ENCODE measurements at regions of chr12 and their contacts with region 1.

Region 1: DNA sequence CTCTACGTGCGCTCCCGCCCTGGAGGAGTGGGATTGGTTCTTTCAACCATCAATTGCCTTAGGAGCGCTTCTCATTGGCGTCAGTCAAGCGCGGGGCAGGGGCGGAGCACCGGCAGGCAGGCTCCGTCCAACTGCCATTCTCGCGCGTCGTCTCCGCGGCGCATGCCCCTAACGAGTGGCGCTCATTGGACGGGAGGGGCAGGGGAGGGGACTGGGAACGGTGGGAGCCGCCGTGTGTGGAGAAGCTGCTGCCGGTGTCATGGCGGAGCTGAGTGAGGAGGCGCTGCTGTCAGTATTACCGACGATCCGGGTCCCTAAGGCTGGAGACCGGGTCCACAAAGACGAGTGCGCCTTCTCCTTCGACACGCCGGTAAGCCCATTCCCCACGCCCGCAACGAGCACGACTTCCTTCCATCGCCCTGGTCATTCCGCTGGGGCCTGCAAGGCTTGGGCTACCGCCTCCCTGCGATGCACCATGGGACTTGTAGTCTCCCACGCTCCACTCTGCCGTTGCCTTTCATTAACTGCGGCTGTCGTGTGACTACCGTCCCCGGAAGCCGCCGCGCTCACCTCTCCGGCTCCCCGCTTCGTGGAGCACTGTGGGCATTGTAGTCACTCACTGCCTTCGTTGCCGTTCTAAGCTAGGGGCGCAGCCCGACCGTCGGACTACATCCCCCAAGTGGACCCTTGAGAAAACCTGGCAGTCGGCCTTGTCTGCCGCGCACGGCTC is at the start of gene USP5:
- DNase-seq: peak; percentile 100
- ATAC-seq: peak; percentile 81
- H3K4me3 ChIP-seq: peak within 1 kb of the TSS; percentile 67 to 94
- H3K27ac ChIP-seq: peak within 1 kb of the TSS; percentile 77
- H3K4me1 ChIP-seq: peaks cover 15 to 31% of the 10 kb centered on the region in 2 experiments
- H3K27me3 ChIP-seq: no peaks in the 10 kb centered on the region
- CTCF ChIP-seq: no peak
- POLR2A ChIP-seq: no peak
- RAD21 ChIP-seq: no peak
- total RNA-seq, gene USP5: 175 TPM

Region 2: DNA sequence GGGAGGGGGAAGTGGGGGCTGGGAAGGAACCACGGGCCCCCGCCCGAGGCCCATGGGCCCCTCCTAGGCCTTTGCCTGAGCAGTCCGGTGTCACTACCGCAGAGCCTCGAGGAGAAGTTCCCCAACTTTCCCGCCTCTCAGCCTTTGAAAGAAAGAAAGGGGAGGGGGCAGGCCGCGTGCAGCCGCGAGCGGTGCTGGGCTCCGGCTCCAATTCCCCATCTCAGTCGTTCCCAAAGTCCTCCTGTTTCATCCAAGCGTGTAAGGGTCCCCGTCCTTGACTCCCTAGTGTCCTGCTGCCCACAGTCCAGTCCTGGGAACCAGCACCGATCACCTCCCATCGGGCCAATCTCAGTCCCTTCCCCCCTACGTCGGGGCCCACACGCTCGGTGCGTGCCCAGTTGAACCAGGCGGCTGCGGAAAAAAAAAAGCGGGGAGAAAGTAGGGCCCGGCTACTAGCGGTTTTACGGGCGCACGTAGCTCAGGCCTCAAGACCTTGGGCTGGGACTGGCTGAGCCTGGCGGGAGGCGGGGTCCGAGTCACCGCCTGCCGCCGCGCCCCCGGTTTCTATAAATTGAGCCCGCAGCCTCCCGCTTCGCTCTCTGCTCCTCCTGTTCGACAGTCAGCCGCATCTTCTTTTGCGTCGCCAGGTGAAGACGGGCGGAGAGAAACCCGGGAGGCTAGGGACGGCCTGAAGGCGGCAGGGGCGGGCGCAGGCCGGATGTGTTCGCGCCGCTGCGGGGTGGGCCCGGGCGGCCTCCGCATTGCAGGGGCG is 318.0 kb before region 1 on chr12 and contains the start of gene GAPDH:
- CTCF ChIA-PET with region 1: no interaction called
- POLR2A ChIA-PET with region 1: interaction called, 13 read pairs
- RAD21 ChIA-PET with region 1: no interaction called
- intact Hi-C with region 1: no loop called
- DNase-seq: peak; percentile 96
- ATAC-seq: peak; percentile 52
- H3K4me3 ChIP-seq: peak within 1 kb of the TSS; percentile 96 to 98
- H3K27ac ChIP-seq: peak within 1 kb of the TSS; percentile 99
- H3K4me1 ChIP-seq: peaks cover 15 to 70% of the 10 kb centered on the region in 2 experiments
- H3K27me3 ChIP-seq: no peaks in the 10 kb centered on the region
- CTCF ChIP-seq: no peak
- POLR2A ChIP-seq: peak; percentile 99
- RAD21 ChIP-seq: no peak
- total RNA-seq, gene GAPDH: 5,901 TPM

Region 3: GRCh38 chr12:6723607-6724396 is 128.3 kb before region 1 on chr12 and contains the start of gene COPS7A:
- CTCF ChIA-PET with region 1: interaction called, 3 read pairs
- POLR2A ChIA-PET with region 1: interaction called, 12 read pairs
- RAD21 ChIA-PET with region 1: no interaction called
- intact Hi-C with region 1: no loop called
- DNase-seq: peak; percentile 98
- ATAC-seq: peak; percentile 96
- H3K4me3 ChIP-seq: peak within 1 kb of the TSS; percentile 54 to 86
- H3K27ac ChIP-seq: peak within 1 kb of the TSS; percentile 91
- H3K4me1 ChIP-seq: peaks cover 5 to 26% of the 10 kb centered on the region in 2 experiments; a peak in 3 of 4 replicates
- H3K27me3 ChIP-seq: no peaks in the 10 kb centered on the region
- CTCF ChIP-seq: no peak
- POLR2A ChIP-seq: peak; percentile 29
- RAD21 ChIP-seq: no peak
- total RNA-seq, gene COPS7A: 67.8 TPM

Region 4: GRCh38 chr12:6825398-6826124 is 26.5 kb before region 1 on chr12:
- CTCF ChIA-PET with region 1: interaction called, 8 read pairs
- POLR2A ChIA-PET with region 1: interaction called, 12 read pairs
- RAD21 ChIA-PET with region 1: no interaction called
- intact Hi-C with region 1: no loop called
- DNase-seq: peak; percentile 47
- ATAC-seq: peak; percentile 46
- H3K4me3 ChIP-seq: no peak overlapping the region
- H3K27ac ChIP-seq: 0 out of 2 replicates have a peak overlapping the region, but pooled peaks have one; percentile 78
- H3K4me1 ChIP-seq: peaks cover 25 to 54% of the 10 kb centered on the region in 2 experiments
- H3K27me3 ChIP-seq: peaks cover 6% of the 10 kb centered on the region; the same call in 1 of the 2 replicates
- CTCF ChIP-seq: peak in 2 of 3 experiments; percentile 91 to 98; a peak in 4 of 6 replicates
- POLR2A ChIP-seq: no peak
- RAD21 ChIP-seq: no peak

Region 5: DNA sequence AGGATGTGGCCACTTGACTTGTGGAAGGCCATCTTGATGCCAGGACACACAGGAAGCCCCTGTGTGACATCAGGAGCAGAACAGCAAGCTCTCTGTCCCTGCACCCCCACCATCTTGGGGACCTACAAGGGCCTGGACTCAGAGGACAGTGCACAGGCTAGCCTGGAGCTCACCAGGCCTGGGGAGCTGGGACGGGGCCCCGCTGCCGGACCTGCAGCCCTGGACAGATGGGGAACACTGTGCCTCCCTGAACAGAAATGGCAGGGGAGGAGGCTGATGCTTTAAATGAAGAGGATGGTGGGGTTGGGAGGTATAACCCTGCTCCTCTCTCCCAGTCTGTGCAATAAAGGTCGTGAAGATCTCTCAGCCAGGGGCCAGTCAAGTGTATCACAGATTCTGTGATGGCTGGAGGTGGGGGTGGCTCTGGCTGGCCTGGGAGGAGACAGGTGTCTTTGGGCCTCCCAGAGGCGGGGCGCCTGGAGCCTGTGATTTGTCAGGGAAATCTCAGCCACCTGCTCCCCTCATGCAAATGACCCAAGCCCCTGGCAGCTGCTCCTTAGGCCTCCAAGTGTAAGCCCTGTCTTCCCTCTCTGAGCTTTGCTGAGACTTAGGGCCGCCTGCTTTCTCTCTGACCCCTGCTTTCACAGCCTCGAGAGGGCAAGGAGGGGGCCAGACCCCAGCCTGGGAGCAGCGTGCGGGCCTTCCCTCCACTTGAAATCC is 12.4 kb before region 1 on chr12:
- CTCF ChIA-PET with region 1: interaction called, 38 read pairs
- POLR2A ChIA-PET with region 1: interaction called, 19 read pairs
- RAD21 ChIA-PET with region 1: no interaction called
- intact Hi-C with region 1: no loop called
- DNase-seq: no peak
- ATAC-seq: no peak
- H3K4me3 ChIP-seq: no peak overlapping the region
- H3K27ac ChIP-seq: no peak overlapping the region
- H3K4me1 ChIP-seq: peaks cover 0 to 14% of the 10 kb centered on the region in 2 experiments; a peak in 2 of 4 replicates
- H3K27me3 ChIP-seq: no peaks in the 10 kb centered on the region
- CTCF ChIP-seq: no peak
- POLR2A ChIP-seq: no peak
- RAD21 ChIP-seq: no peak

Region 6: DNA sequence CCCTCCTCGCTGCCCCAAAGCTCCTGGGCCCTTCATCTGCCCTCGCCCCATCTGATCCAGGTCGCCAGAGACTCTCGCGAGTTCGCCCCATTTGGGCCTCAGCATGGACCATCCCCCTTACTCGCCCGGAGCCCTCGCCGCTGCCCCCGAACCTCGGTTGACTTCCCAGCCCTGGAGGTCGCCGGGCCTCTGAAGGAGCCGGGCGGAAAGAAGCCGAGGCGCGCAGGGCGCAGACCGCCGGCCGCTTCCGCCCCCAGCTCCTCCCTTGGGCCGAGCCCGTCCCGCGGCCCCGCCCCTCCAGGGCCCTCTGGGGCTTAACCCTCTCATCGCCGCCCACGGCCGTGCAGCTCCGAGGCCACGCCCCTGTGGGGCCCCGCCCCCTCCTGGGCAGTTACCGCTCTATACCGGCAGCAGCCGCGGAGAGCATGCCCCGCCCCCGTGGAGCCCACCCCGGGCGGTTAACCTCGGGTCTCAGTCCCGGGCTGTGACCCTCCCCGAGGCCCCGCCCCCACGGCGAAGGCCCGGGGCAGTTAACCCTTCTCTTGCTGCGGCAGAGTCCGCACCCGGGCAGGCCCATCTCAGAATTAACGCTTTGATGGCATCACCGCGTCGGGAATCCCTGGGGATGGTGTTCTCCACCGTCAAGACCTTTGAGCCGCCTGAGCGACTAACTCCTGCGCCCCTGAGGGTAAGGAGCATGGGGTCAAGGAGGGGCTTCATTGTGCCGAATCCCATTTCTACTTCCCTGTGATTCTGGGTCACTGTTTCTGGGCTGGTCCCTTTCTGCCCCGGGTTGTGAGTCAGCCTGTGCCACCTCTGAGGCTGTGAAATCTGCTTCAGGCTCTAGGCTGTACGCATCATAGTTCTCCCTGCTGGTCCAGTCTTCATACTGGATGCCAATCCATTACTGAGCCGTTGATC is 21.3 kb after region 1 on chr12 and contains the start of gene SPSB2:
- CTCF ChIA-PET with region 1: interaction called, 30 read pairs
- POLR2A ChIA-PET with region 1: interaction called, 186 read pairs
- RAD21 ChIA-PET with region 1: interaction called in 1 of 2 experiments, 5 read pairs
- intact Hi-C with region 1: no loop called
- DNase-seq: peak; percentile 89
- ATAC-seq: peak; percentile 79
- H3K4me3 ChIP-seq: peak within 1 kb of the TSS; percentile 73 to 92
- H3K27ac ChIP-seq: peak within 1 kb of the TSS; percentile 96
- H3K4me1 ChIP-seq: peaks cover 23 to 50% of the 10 kb centered on the region in 2 experiments
- H3K27me3 ChIP-seq: no peaks in the 10 kb centered on the region
- CTCF ChIP-seq: no peak
- POLR2A ChIP-seq: peak; percentile 35
- RAD21 ChIP-seq: no peak
- total RNA-seq, gene SPSB2: 10.0 TPM

Measured in HCT116 (cell line).